B cell (primary cell): ENCODE measurements at regions of chr12 and their contacts with region 1.

Region 1: DNA sequence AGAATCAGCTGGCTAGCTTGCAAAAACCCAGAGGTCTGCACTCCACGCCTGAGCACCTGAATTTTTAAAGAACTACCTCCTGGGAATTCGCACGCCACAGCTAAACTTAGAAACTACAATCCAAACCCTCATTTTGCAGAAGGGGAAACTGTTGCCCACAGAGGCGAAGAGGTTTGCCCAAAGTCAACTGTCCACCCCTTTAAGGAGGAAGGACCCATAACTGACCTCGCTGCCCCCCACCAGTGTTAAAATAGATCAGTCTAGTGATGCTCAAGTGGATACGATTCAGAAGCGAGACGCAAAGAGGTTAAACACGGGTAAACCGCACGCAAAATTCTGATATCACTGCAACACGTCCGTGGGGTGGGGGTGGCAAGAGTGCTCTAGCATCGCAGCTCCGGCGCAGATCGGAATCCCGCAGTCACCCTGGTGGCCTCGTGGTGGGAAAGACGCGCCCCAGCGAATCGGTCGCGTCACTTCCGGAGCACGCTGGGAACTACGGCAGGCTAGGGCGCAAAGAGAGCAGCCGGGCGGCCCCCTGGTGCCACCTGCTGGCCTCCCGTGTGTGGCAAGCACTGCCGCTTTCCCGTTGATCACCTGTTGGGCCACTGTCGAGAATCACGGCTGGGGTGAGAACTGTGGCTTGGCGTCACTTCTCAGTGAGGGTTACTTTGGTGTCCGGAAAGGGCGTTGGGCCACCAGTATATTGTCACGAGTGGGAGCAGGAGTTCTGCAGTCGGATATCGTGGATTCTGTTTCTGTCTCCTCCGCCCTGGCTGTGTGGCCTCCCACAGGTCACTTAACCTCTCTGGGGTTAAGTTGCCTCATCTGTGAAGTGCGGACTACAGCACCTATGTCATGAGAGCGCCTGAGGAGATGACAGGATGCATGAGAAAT is at the start of gene ALKBH2:
- DNase-seq: peak; percentile 96
- ATAC-seq: peak; percentile 70
- H3K4me3 ChIP-seq: peak within 1 kb of the TSS; percentile 64 to 98 (median 85)
- H3K4me3 Mint-ChIP-seq: peak within 1 kb of the TSS; percentile 95
- H3K27ac ChIP-seq: peak within 1 kb of the TSS; percentile 58 to 78
- H3K27ac Mint-ChIP-seq: peak within 1 kb of the TSS; percentile 89
- H3K4me1 ChIP-seq: peaks cover 24 to 28% of the 10 kb centered on the region in 2 donors
- H3K4me1 Mint-ChIP-seq: peaks cover 34% of the 10 kb centered on the region
- H3K27me3 ChIP-seq: no peaks in the 10 kb centered on the region
- H3K27me3 Mint-ChIP-seq: no peaks in the 10 kb centered on the region
- CTCF ChIP-seq: peak; percentile 97
- total RNA-seq, gene ALKBH2: 14.5 and 14.6 TPM in 2 replicates

Region 2: GRCh38 chr12:108119126-108119976 is 973.9 kb before region 1 on chr12:
- CTCF ChIA-PET with region 1: no interaction called
- POLR2A ChIA-PET with region 1: no interaction called
- intact Hi-C with region 1: loop called (anchors 5 kb)
- DNase-seq: peak; percentile 69
- ATAC-seq: peak; percentile 70
- H3K4me3 ChIP-seq: peak overlapping the region in 1 of 5 experiments; percentile 12
- H3K4me3 Mint-ChIP-seq: peak overlapping the region; percentile 66
- H3K27ac ChIP-seq: peak overlapping the region; percentile 68 to 74
- H3K27ac Mint-ChIP-seq: peak overlapping the region; percentile 89
- H3K4me1 ChIP-seq: peaks cover 22 to 62% of the 10 kb centered on the region in 2 donors
- H3K4me1 Mint-ChIP-seq: peaks cover 55% of the 10 kb centered on the region
- H3K27me3 ChIP-seq: peaks cover 0 to 4% (median 0%) of the 10 kb centered on the region in 4 experiments
- H3K27me3 Mint-ChIP-seq: peaks cover 6% of the 10 kb centered on the region
- CTCF ChIP-seq: no peak

Region 3: DNA sequence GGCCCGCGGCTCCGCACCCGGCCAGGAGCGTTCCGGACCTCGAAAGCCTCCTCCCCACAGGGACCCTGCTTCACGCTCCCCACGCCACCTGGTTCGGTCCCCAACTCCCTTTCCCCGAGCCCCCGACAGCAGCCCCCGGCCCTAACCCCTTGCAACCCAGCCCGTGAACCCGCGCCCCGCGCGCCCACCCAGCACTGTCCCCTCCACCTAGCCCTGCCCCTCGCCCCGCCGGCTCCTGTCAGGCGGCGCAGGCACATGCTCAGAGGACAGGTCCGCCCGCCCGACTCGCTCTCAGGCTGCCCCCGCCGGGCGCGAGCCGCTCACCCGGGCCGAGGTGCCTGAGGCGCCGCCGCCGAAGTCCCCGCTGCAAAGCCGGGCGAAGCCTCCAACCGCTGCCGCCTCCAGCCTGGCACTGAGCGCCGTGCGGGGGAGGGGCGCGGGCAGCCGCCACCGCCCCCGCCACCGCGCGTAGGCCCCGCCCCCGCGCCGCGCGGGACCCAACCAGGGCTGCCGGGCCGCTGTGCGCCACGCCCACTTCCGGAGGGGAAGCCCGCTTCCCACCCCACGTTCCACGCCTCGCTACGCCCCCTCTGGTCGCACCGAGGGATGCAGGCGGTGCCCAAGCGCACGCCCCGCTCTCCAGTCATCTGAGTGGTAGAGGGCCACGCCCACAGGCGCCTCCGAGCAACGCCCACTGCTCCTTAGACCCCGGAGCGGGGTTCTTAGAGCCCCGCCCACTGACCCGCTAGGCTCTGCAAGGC is 362.0 kb before region 1 on chr12 and contains the start of gene CORO1C:
- CTCF ChIA-PET with region 1: no interaction called
- POLR2A ChIA-PET with region 1: no interaction called
- intact Hi-C with region 1: loop called (anchors 5 kb)
- DNase-seq: peak; percentile 97
- ATAC-seq: peak; percentile 73
- H3K4me3 ChIP-seq: peak within 1 kb of the TSS; percentile 70 to 92 (median 86)
- H3K4me3 Mint-ChIP-seq: peak within 1 kb of the TSS; percentile 99
- H3K27ac ChIP-seq: peak within 1 kb of the TSS; percentile 80 to 92
- H3K27ac Mint-ChIP-seq: peak within 1 kb of the TSS; percentile 98
- H3K4me1 ChIP-seq: peaks cover 11 to 16% of the 10 kb centered on the region in 2 donors
- H3K4me1 Mint-ChIP-seq: peaks cover 51% of the 10 kb centered on the region
- H3K27me3 ChIP-seq: no peaks in the 10 kb centered on the region
- H3K27me3 Mint-ChIP-seq: no peaks in the 10 kb centered on the region
- CTCF ChIP-seq: peak; percentile 83
- total RNA-seq, gene CORO1C: 58.9 and 68.0 TPM in 2 replicates

Region 4: DNA sequence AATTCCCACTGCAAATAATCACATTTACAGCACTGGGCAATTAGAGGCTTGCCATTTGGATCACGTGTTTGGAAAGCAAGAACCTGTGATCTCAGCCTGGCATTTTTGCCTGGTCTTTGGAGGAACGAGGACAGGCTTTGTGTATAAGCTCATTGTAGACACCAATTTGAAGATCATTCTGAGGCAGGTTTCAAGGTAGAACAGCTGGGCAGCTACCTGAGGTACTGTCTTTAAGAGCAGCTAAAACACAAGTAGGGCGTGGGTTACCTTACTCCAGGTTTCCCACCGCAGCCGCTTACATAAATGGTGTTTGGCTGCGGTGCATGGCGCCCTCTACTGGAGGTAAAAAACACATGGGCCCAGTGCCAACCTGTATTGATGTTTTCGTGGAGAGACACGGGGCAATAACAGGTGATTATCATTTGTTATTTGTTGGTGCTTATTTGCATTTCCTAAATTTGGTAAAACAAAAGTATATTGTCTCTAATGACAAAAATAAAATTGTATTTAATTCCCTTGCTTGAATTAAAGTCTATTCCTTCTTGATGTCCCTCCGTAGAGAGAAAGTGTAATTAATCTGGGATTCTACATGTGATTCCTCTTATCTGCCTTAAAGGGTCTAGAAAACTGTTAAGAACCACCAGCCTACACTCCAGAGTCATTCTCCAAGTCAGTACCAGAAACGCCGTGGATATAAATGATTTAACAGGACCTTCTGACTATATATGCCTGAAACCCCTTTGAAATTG is 142.1 kb before region 1 on chr12:
- CTCF ChIA-PET with region 1: interaction called, 7 read pairs
- POLR2A ChIA-PET with region 1: no interaction called
- intact Hi-C with region 1: loop called (anchors 1 kb)
- DNase-seq: peak; percentile 85
- ATAC-seq: peak; percentile 73
- H3K4me3 ChIP-seq: no peak overlapping the region
- H3K4me3 Mint-ChIP-seq: no peak overlapping the region
- H3K27ac ChIP-seq: no peak overlapping the region
- H3K27ac Mint-ChIP-seq: no peak overlapping the region
- H3K4me1 ChIP-seq: peaks cover 0 to 4% of the 10 kb centered on the region in 2 donors
- H3K4me1 Mint-ChIP-seq: peaks cover 6% of the 10 kb centered on the region
- H3K27me3 ChIP-seq: peaks cover 0 to 5% (median 0%) of the 10 kb centered on the region in 4 experiments
- H3K27me3 Mint-ChIP-seq: peaks cover 9% of the 10 kb centered on the region
- CTCF ChIP-seq: peak; percentile 99

Region 5: DNA sequence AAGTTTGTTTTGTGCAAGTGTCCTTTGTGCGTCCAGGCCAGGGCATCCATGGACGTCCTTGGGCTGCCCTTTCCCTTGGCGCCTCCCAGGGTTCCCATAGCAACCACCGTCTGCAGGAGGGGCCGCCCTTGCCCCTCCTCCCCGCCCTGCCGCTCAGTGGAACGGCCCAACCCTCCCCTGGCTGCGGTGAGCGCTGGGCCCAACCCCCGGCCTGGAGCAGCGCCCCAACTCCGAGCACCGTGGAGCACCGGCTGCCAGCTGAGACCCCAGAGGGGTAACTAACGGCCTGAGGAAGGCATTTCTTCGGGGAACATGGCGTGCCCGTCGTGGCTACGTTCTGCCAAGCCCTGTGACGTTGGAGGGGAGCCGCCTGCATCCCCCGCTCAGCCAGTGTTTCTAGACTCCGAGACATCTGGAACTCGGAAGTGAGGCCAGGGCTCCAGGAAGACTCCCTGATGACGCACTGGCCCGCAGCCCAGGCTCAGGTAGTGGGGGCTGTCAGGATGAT is 17.8 kb after region 1 on chr12:
- CTCF ChIA-PET with region 1: interaction called, 19 read pairs
- POLR2A ChIA-PET with region 1: interaction called, 3 read pairs
- intact Hi-C with region 1: loop called (anchors 1 kb)
- DNase-seq: peak; percentile 61
- ATAC-seq: peak; percentile 85
- H3K4me3 ChIP-seq: peak overlapping the region in 4 of 5 experiments; percentile 50 to 62 (median 58)
- H3K4me3 Mint-ChIP-seq: peak overlapping the region; percentile 81
- H3K27ac ChIP-seq: peak overlapping the region in 1 of 2 donors; percentile 59
- H3K27ac Mint-ChIP-seq: peak overlapping the region; percentile 73
- H3K4me1 ChIP-seq: peaks cover 0 to 3% of the 10 kb centered on the region in 2 donors
- H3K4me1 Mint-ChIP-seq: peaks cover 10% of the 10 kb centered on the region
- H3K27me3 ChIP-seq: no peaks in the 10 kb centered on the region
- H3K27me3 Mint-ChIP-seq: no peaks in the 10 kb centered on the region
- CTCF ChIP-seq: no peak

Region 6: GRCh38 chr12:109713187-109713984 is 620.1 kb after region 1 on chr12 and contains the start of gene FAM222A:
- CTCF ChIA-PET with region 1: no interaction called
- POLR2A ChIA-PET with region 1: no interaction called
- intact Hi-C with region 1: loop called (anchors 10 kb)
- DNase-seq: peak; percentile 99
- ATAC-seq: peak; percentile 84
- H3K4me3 ChIP-seq: peak within 1 kb of the TSS in 4 of 5 experiments; percentile 53 to 80 (median 64)
- H3K4me3 Mint-ChIP-seq: peak within 1 kb of the TSS; percentile 85
- H3K27ac ChIP-seq: peak within 1 kb of the TSS in 1 of 2 donors; percentile 52
- H3K27ac Mint-ChIP-seq: peak within 1 kb of the TSS; percentile 82
- H3K4me1 ChIP-seq: peaks cover 10 to 11% of the 10 kb centered on the region in 2 donors
- H3K4me1 Mint-ChIP-seq: peaks cover 11% of the 10 kb centered on the region
- H3K27me3 ChIP-seq: peaks cover 0 to 59% (median 23%) of the 10 kb centered on the region in 4 experiments
- H3K27me3 Mint-ChIP-seq: peaks cover 37% of the 10 kb centered on the region
- CTCF ChIP-seq: no peak
- total RNA-seq, gene FAM222A: 4.6 and 4.7 TPM in 2 replicates